IMR-90 (cell line): ENCODE measurements at regions of chr7 and their contacts with region 1.

Region 1: DNA sequence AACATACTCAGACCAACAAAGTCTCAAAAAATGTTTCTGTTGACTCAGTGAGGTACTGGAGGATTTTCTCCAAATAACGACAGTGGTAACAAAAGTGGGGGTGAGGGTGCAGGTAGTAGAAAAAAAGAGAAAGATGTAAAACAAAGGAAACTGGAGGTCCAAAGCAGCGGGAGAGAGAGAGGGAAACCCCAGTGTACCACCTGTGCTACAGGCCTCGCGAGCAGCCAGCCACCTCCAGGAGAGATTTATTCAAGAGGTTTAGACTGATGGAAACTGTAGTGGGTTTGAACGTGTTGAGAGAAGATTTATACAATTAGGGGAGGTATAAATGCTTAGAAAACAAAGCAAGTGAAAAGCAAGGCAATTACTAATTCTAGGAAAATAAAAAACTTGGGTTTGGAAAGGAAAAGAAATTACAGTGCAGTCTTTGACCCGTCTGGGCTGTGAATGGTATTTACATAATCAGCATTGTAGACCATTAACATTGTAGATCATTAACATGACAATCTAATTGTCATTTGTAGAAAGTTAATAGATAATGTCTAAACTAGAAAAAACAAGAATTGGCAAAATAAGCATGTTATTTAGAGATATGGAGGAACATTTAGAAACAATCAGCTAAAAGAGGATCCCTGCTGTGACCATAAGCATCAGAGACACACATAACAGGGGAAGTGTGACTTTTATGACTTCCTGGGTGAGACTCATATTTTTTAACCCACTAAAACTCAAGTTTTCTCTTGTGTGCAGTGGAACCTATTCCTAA is 180.0 kb downstream of the RELN start:
- DNase-seq: no peak
- ATAC-seq: no peak
- H3K4me3 ChIP-seq: no peak overlapping the region
- H3K27ac ChIP-seq: no peak overlapping the region
- H3K4me1 ChIP-seq: peaks cover 2% of the 10 kb centered on the region; the same call in 1 of the 2 replicates
- H3K27me3 ChIP-seq: no peaks in the 10 kb centered on the region
- CTCF ChIP-seq: no peak
- POLR2A ChIP-seq: no peak
- RAD21 ChIP-seq: no peak

Region 2: GRCh38 chr7:103626776-103627175 is 182.6 kb before region 1 on chr7:
- CTCF ChIA-PET with region 1: no interaction called
- POLR2A ChIA-PET with region 1: no interaction called
- dilution Hi-C with region 1: no loop called
- in situ Hi-C with region 1: no loop called
- intact Hi-C with region 1: loop called (anchors 10 kb)
- DNase-seq: peak; percentile 34
- ATAC-seq: peak; percentile 55
- H3K4me3 ChIP-seq: no peak overlapping the region
- H3K27ac ChIP-seq: no peak overlapping the region
- H3K4me1 ChIP-seq: peaks cover 6% of the 10 kb centered on the region; the same call in 1 of the 2 replicates
- H3K27me3 ChIP-seq: no peaks in the 10 kb centered on the region
- CTCF ChIP-seq: no peak
- POLR2A ChIP-seq: no peak
- RAD21 ChIP-seq: no peak